ENCODE measurements at regions of chr1 and their contacts with region 1.

Region 1: DNA sequence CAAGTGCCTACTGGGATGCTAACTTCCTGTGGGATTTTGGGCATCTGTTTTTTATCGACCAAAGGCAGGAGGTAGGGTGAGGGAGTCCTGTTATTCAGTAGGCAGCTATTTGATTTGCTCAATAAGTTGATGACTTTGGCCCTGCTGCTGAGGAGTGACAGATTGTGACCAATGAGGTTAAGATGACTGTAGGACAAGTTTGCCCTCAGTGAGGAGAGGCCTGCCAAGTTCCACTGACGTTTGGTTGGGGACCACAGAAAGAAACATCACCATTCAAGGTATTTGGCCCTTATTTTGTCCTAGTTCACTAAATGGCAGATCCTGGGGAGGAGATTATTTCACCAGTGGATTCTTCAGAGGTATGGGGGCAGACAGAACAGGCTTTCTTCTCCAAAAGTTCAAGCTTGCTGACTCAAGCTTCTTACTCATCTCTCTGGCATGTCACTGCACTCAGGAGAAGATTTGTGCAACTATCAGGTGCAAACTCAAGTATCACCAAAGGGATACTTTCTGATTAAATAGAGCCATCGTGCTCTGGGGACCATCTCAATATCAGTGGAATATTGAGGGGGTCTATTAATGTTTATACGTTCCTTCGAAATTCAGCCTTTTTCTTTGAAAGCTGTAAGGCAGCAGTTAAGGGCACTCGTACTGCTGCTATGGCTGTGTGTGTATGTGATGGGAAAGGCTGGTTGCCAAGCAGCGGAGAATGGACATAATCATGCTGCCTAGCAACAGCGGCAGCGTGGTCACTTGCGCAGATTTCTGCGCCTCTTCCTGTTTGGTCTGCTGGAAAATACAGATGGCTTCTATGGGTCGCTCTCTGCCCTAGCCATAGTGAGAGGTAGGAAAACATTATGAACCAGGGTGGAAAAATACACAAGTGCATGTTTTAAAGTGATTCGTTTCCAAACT is 78.7 kb downstream of the PBX1 start:
- DNase-seq: peak; percentile 72
- ATAC-seq: peak; percentile 73

Region 2: DNA sequence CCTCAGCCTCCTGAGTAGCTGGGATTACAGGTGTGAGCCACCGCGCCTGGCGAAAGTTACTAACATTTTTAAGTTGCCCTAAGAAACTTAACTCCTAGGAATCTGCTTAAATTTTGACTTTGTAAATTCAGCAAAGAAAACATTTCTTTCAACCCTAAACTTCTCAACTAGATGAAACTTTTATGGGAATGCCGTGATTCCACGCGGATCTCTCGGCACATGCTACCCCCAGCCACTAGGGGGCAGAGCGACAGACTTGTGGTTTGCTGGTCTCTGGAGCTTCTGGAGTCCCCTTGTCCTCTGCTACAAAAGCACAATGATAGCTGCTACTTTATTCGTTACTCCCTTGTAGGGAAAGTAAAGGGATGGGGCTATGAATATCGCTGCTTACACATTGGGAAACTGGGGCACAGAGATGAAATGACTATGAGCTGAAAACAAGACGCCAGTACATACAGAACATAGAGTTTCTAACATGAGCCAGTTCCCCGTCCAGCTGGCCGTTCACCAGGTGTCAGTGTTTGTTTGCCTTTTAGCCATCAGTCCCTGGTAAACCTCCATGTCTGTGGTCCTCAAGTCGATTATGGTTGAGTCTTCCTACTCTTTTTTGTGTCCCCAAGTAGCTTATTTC is 36.0 kb after region 1 on chr1:
- intact Hi-C with region 1: no loop called
- DNase-seq: no peak
- ATAC-seq: no peak

Region 3: GRCh38 chr1:164707868-164708331 is 70.2 kb after region 1 on chr1:
- intact Hi-C with region 1: loop called (anchors 10 kb)
- DNase-seq: peak; percentile 51
- ATAC-seq: peak; percentile 62

Measured in left ventricle myocardium superior (tissue), 1 donor.